Cardiac septum (tissue), 1 donor: ENCODE measurements at regions of chr2 and their contacts with region 1.

Region 1: DNA sequence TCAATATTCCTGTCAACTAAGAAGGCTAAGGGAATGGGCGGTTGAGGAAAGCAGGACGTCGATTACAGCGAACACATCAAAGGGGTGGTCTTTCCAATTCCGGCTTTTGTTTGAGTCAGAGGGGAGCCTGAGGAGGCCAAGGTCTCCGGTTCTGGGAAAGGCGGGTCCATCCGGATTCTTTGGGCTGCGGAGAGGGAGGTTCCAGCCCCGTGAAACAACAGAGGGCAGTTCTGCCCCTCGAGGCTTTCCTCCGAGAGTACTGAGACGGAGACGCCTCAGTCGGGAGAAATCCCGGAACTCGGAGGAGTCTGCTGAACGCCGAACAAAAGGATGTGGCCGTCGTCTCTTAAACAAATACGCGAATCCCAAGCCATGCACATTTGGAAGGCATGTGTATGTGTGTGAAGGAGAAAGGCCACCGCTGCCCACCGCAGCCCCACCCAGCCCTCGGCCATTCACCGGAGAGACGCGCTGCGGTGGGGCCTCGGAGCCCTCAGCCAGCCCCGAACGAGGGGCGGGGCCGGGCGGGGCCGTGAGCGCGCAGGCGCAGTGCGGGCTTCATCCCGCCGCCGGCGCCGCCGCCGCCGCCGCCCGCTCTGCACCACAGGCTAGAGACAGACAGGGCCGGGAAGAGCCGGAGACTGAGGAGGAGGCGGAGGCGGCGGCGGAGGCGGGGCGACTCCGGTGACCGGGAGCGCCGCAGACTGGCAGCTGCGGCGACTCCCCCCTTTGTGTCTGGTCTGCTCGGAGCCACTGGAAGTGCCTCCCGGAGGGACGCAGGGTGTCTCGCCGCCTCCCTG is at the start of gene BMPR2:
- DNase-seq: peak; percentile 94
- total RNA-seq, gene BMPR2: 83.6 TPM

Region 2: GRCh38 chr2:202265467-202266277 is 110.1 kb before region 1 on chr2 and contains the start of gene NOP58:
- intact Hi-C with region 1: loop called (anchors 1 kb)
- DNase-seq: peak; percentile 96
- total RNA-seq, gene NOP58: 24.4 TPM

Region 3: DNA sequence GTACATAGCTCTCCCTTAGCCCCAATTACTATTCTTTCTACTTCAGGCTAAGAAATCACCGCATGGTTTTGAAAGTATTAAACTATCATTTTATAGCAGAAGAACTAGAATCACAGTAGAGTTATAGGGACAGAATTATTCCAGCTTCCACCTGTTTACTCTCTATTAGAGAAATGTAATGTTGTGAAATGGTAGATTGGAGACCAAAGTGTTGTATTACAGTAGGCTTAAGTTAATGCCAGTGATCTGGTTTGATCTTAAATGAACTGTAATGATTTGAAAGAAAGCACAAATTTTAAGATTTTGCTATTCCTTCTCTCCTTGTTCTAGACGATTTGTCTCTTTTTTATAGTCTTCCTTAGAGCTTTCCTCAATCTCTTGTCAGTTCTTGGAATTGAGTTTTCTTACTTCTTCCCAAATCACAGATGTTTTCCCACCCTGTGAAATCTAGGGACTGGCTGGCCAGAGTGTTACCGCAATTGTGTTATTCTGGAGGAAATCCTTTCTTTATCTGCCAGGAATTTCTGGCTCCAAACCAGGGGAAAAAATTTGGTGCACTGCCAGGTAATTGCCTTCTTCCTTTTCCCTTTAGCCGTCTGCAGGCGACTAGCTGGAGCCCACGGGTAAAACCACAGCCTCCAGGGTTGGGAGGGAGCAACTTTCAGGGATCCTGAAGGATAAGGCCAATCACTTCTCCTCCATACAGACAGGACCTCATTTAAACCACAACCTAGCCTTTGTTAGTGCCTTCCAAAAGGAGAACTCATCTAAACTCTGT is 58.5 kb before region 1 on chr2:
- intact Hi-C with region 1: loop called (anchors 1 kb)
- DNase-seq: no peak

Region 4: DNA sequence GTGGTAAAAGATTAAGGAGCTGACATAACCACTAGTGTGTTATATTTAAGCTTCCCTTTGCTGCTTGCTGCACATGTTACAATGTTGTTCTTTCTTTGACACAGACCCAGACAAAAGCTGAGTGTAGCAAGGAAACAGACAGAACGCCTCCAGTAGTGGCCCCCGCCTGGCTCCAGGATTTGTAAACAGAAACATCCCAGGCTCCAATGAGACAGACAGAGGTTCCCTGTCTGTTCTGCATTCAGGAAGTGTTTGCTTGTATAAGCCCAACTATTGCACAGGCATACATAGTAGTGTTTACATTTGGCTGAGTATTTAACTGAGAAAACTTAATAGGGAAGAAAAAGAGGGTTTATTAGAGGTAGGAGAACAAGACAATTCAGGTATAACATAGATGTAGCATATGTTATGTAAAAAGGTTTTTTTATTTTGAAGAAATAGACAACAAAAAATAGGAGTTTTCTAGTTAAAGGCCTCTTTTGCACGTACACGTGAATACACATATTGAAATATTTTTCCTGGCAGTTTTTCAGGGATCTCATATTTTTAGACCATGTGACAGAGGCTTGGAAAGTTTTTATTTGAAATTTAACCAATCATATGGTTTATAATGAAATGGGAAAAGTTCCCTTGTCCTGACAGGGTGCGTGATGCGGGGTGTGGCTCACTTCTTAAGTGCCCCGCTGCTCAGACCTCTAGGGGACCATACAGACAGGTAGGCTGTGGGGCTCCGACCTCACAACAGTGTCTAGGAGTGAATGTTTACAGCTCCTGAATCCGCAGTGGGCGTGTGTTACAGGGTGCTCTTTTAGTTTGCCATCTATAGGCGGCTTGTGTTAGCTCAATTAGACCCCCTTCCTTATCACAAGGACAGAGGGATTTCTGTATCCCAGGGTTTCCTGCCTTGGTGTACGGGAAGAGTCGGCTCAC is 118.8 kb after region 1 on chr2:
- intact Hi-C with region 1: loop called (anchors 10 kb)
- DNase-seq: no peak

Region 5: GRCh38 chr2:202911512-202912341 is 535.9 kb after region 1 on chr2 and contains the starts of genes CARF and WDR12:
- intact Hi-C with region 1: loop called (anchors 5 kb)
- DNase-seq: peak; percentile 96
- total RNA-seq, gene CARF: 9.0 TPM
- total RNA-seq, gene WDR12: 31.0 TPM